Activated T-helper 2 cell treated with anti-CD3 and anti-CD28 coated beads, Interferon-gamma antibody, Interleukin-2, Interleukin-4, amounts not matched to agents 10 μg/mL and 5 μg/mL and 100 μg/mL, durations not matched to agents 14 hours and 24 hours and 36 hours (primary cell): ENCODE measurements at regions of chr14 and their contacts with region 1.

Region 1: DNA sequence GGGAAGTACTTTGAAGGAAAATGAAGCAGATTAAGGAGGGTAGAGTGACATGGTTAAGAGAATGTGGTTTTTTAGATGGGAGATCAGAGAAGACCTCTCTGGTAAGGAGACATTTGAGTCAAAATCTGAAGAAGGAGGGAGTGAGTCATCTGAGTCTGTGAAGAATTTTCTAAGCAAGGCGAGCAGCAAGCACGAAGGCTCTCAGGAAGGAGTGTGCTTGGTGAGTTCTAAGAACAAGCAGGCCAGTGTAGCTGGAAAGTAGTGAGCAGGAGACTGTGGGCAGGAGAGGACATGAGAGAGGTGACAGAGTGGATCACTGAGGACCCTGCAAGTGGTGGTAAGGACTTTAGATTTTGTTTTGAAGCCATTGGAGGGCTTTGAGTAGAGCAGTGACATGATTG is 76.3 kb upstream of the FUT8 start:
- DNase-seq: peak; percentile 56
- H3K4me3 Mint-ChIP-seq: peak overlapping the region; percentile 87
- H3K27ac Mint-ChIP-seq: peak overlapping the region; percentile 94
- H3K4me1 Mint-ChIP-seq: peaks cover 56% of the 10 kb centered on the region
- H3K27me3 Mint-ChIP-seq: no peaks in the 10 kb centered on the region

Region 2: GRCh38 chr14:64928239-64929013 is 407.8 kb before region 1 on chr14:
- intact Hi-C with region 1: no loop called
- DNase-seq: no peak
- H3K4me3 Mint-ChIP-seq: no peak overlapping the region
- H3K27ac Mint-ChIP-seq: no peak overlapping the region
- H3K4me1 Mint-ChIP-seq: peaks cover 24% of the 10 kb centered on the region
- H3K27me3 Mint-ChIP-seq: no peaks in the 10 kb centered on the region

Region 3: GRCh38 chr14:65070455-65070976 is 265.7 kb before region 1 on chr14:
- intact Hi-C with region 1: no loop called
- DNase-seq: no peak
- H3K4me3 Mint-ChIP-seq: no peak overlapping the region
- H3K27ac Mint-ChIP-seq: no peak overlapping the region
- H3K4me1 Mint-ChIP-seq: peaks cover 15% of the 10 kb centered on the region
- H3K27me3 Mint-ChIP-seq: no peaks in the 10 kb centered on the region

Region 4: DNA sequence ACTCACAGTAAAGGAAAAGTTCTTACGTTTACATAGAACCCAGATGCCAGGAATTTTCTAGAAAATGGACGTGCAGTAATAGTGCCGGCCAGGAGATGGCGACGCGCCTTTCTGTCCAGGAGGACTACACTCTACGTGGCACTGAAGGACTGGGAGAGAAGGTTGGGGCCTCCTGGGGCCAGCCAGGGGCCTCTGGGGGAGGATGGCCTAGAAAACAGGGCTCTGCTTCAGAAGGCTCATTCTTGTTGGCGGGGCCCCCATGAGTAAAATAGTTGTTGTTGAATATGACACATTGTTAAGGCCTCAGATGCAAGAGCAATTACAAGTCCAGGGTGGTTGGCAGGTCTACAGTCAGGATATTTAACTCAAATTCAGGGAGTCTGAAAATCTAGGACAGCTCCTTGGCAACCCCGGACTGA is 113.7 kb before region 1 on chr14:
- intact Hi-C with region 1: loop called (anchors 1 kb)
- DNase-seq: peak; percentile 35
- H3K4me3 Mint-ChIP-seq: no peak overlapping the region
- H3K27ac Mint-ChIP-seq: peak overlapping the region; percentile 24
- H3K4me1 Mint-ChIP-seq: peaks cover 34% of the 10 kb centered on the region
- H3K27me3 Mint-ChIP-seq: no peaks in the 10 kb centered on the region

Region 5: DNA sequence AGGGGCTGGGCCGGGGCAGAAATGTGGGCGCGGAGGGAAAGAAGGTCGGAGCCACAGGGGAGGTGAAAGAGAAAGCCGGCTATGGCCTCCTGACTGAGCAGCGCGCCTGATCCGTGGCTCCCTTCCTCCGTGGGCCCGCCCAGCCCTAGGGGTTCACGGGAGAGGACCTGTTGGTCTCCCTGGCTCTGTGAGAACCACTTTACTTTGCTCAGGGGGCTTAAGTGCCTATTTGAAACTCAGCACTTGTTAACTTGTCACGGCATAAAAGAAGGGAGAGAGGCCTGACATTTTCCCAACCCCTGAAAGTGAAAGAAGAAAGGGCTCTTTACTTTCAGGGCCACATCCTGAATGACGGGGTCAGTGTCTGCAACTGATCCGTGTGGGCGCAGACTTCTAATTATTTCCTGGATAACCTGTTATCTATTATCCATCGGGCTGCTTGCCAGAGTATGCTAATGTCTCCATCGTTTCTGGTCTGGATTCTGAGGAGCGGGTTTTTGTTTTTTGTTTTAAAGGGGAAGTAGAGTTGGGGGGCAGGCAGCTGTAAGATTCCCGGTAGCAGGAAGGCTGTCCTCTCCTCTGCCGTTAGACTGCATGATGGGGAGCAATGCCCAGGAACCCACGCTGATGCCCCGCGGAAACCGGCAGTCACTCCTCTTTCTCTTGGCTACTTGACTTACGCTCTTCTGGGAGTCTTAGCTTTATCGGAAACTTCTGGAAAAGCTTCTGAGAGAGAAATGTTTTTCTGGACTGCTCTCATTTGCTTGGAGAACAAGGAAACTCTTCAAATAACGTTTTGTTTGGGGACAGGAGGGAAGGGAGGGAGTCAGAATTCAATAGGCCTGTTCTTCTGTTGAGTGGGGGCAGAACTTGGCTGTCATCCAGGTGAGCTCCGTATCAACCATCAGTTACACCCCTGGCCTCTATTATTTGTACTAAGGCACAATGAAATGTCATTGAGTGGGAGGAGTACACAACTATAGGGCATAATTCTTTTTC is 106.1 kb before region 1 on chr14:
- intact Hi-C with region 1: loop called (anchors 1 kb)
- DNase-seq: no peak
- H3K4me3 Mint-ChIP-seq: peak overlapping the region; percentile 81
- H3K27ac Mint-ChIP-seq: peak overlapping the region; percentile 90
- H3K4me1 Mint-ChIP-seq: peaks cover 42% of the 10 kb centered on the region
- H3K27me3 Mint-ChIP-seq: no peaks in the 10 kb centered on the region

Region 6: GRCh38 chr14:65302571-65303189 is 33.5 kb before region 1 on chr14:
- intact Hi-C with region 1: loop called (anchors 1 kb)
- DNase-seq: peak; percentile 24
- H3K4me3 Mint-ChIP-seq: peak overlapping the region; percentile 53
- H3K27ac Mint-ChIP-seq: peak overlapping the region; percentile 94
- H3K4me1 Mint-ChIP-seq: peaks cover 63% of the 10 kb centered on the region
- H3K27me3 Mint-ChIP-seq: no peaks in the 10 kb centered on the region

Region 7: DNA sequence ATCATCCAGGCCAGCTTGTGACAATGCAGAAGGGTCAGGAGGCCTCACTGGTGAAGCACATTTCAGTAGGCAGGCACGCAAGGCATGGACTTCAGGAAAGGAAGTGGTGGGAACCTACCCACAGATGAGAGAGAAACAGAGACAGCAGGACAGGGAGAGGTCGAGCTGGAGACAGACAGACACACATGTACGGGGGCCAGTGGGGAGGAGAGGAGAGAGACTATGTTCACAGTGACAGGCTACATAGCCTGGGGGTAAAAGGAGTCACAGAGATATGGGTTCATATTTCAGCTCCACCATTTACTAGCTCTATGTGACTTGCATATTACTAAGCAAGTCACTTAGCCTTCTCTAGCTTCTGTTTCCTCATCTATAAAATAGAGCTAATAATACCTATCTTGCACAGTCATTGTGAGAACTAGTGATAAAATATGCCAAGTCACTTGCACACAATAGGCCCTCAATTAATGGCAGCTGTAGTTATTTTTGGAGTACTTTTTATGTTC is 14.8 kb before region 1 on chr14:
- intact Hi-C with region 1: no loop called
- DNase-seq: no peak
- H3K4me3 Mint-ChIP-seq: no peak overlapping the region
- H3K27ac Mint-ChIP-seq: peak overlapping the region; percentile 64
- H3K4me1 Mint-ChIP-seq: peaks cover 46% of the 10 kb centered on the region
- H3K27me3 Mint-ChIP-seq: no peaks in the 10 kb centered on the region

Region 8: DNA sequence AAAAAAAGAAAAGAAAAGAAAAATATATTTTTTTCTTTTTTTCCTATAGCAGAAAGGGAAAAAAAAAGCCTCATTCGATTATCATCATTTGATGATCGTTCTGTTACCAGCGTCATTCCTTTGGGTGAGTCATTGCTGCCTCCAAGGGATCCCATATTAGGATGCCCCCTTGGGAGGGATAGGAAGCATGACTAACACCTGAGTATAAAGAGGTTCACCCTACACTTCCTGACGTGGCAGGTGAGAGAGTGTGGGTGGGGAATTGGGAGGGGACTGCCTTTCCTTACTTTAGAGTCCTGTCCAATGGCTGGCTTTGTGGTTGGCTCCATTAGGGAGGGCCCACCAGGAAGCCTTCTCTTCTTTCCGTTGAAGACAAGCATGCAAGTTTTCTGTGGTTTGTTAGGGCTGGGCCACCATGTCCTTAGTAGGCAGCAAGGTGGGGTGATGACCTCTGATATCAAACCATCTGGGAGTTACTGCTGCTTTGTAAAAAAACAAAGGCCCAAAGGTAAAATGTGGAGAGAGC is 20.2 kb after region 1 on chr14:
- intact Hi-C with region 1: loop called (anchors 1 kb)
- DNase-seq: peak; percentile 47
- H3K4me3 Mint-ChIP-seq: peak overlapping the region; percentile 20
- H3K27ac Mint-ChIP-seq: peak overlapping the region; percentile 74
- H3K4me1 Mint-ChIP-seq: peaks cover 48% of the 10 kb centered on the region
- H3K27me3 Mint-ChIP-seq: no peaks in the 10 kb centered on the region

Region 9: DNA sequence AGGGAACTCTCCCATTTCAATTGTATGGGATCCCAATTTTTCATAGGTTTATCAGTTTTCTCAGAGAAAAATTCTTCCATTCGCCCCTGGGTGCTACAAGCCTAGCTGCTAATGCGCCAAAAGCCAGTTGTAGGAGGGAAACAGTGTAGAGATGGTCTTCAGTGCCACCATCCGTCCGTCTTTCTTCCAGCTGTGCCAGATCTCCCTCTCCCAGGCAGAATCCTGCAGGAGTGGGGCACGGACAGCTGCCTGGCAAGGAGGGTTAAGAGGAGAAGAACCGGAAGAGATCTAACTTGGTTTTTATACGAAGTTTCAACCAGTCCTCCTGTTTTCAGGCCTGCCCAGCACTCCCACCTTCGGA is 37.5 kb after region 1 on chr14:
- intact Hi-C with region 1: loop called (anchors 2 kb)
- DNase-seq: no peak
- H3K4me3 Mint-ChIP-seq: no peak overlapping the region
- H3K27ac Mint-ChIP-seq: peak overlapping the region; percentile 50
- H3K4me1 Mint-ChIP-seq: peaks cover 42% of the 10 kb centered on the region
- H3K27me3 Mint-ChIP-seq: no peaks in the 10 kb centered on the region